Activated T-helper 1 cell treated with anti-CD3 and anti-CD28 coated beads, Interleukin-12 subunit alpha, Interleukin-12 subunit beta, Interleukin-2, Interleukin-4 antibody, amounts not matched to agents 30 ng/mL and 10 ng/mL and 1 ng/mL, durations not matched to agents 14 hours and 24 hours and 36 hours (primary cell): ENCODE measurements at regions of chr19 and their contacts with region 1.

Region 1: DNA sequence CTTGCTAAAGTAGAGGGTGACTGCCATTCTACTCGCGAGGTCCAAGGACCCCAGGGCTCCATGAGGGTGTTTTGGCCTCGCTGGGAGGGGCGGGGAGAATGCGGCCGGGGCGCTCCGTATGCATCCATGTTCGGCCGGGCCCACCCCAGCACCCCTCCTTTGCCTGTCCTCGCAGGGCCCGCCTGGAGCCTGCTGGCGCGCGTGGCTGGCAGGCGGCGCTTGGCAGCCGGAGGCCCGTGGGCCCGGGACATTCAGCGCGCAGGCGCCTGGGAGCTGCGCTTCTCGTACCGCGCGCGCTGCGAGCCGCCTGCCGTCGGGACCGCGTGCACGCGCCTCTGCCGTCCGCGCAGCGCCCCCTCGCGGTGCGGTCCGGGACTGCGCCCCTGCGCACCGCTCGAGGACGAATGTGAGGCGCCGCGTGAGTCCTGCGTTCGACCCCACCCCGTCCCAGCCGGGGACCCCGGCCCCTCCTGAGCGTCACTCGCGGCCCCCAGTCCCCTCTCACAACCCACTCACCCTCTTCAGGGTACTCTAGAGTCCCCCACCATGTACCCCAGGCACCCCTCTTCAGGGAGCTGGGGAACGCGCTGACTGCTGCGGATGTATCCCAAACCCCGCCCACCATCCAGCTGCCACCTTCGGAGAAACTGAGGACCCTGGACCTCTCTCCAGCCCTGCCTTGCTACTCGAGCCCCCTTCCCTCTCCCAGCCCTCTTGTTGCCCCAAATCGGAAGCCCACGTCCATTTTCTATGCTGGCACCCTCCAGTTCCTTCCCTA is 4.1 kb downstream of the DLL3 start:
- DNase-seq: peak; percentile 76
- H3K4me3 Mint-ChIP-seq: no peak overlapping the region
- H3K27ac Mint-ChIP-seq: no peak overlapping the region
- H3K4me1 Mint-ChIP-seq: peaks cover 27% of the 10 kb centered on the region
- H3K27me3 Mint-ChIP-seq: peaks cover 70% of the 10 kb centered on the region

Region 2: DNA sequence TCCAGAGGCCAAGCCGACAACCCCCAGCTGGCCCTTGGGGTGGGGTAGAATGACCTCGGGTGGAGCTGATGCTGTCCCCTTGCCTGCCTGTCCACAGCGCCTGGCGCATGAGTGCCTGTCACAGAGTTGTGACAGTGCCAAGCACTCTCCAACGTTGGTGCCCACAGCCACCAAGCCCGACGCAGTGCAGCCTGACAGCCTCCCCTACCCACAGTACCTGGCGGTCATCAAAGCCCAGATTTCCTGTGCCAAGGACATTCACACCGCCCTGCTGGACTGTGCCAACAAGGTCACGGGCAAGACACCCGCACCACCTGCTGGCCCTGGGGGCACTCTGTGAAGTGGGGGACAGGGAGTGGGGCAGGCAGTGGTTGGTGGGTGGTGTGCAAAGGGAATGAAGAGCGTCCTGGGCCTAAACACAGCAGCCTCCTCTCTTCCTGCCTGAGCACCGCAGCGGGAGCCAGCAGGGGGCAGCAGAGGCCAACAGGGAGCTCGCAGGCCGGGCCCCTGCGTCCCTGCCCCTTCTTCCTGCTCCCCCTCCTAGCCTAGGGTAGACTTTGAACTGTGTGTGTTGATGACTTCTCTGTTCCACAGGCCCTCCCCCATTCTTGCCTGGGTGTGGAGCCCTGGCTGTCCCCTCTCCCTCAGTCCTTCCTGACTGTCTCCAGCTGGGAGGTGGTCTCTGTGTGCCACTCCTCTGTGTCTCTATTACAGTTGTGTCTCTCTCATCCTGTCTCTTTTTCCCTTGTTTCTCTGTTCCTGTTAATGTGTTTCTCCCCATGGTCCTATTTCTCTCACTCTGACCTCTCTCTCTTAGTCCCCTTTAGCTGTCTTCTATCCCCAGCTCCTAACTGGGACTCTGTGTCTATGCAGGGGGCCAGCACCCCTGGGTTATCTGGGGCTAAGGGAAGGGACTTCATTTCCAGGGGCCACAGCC is 105.2 kb before region 1 on chr19:
- intact Hi-C with region 1: loop called (anchors 1 kb)
- DNase-seq: peak; percentile 88
- H3K4me3 Mint-ChIP-seq: no peak overlapping the region
- H3K27ac Mint-ChIP-seq: peak overlapping the region; percentile 67
- H3K4me1 Mint-ChIP-seq: peaks cover 58% of the 10 kb centered on the region
- H3K27me3 Mint-ChIP-seq: no peaks in the 10 kb centered on the region

Region 3: DNA sequence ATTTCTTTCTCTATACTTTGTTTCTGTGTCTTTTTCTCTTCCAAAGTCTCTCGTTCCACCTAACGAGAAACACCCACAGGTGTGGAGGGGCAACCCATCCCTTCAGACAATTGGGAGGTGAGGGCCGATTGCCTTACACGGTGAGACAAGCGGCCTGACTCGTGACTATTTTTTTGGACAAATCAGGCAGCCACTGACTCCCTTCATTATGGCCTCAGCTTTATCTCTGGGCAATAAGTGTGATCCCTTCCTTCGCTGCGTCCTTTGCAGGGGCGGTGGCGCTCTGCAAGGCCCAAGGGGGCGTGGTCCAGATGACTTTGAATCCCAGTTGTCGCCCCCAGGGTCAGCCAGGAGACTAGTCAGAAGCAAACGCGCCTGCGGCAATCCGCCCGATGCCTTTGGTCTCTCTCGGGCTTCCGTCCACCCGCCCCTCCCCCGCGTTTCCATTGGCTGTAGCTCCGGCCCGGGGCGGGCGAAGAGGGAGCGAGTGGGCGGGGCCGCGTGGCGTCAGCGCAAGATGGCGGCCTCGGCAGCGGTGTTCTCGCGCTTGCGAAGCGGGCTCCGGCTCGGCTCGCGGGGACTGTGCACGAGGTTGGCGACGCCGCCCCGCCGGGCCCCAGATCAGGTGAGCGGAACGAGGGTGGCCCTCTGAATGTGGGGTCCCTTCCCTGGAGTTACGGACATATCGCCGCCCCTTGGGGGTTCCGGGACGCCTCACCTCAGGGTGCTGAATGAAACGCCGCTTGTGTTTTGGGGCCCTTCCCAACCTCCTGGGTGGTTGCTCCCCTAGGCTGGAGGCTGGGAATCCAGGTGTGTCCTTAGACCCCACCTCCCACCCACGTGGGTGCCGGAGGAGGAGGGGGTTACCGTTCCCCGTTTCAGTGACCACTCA is 22.2 kb before region 1 on chr19 and contains the start of gene TIMM50:
- intact Hi-C with region 1: loop called (anchors 2 kb)
- DNase-seq: peak; percentile 96
- H3K4me3 Mint-ChIP-seq: peak within 1 kb of the TSS; percentile 95
- H3K27ac Mint-ChIP-seq: peak within 1 kb of the TSS; percentile 94
- H3K4me1 Mint-ChIP-seq: peaks cover 28% of the 10 kb centered on the region
- H3K27me3 Mint-ChIP-seq: no peaks in the 10 kb centered on the region
- total RNA-seq, gene TIMM50: 121 and 127 TPM in 2 replicates

Region 4: DNA sequence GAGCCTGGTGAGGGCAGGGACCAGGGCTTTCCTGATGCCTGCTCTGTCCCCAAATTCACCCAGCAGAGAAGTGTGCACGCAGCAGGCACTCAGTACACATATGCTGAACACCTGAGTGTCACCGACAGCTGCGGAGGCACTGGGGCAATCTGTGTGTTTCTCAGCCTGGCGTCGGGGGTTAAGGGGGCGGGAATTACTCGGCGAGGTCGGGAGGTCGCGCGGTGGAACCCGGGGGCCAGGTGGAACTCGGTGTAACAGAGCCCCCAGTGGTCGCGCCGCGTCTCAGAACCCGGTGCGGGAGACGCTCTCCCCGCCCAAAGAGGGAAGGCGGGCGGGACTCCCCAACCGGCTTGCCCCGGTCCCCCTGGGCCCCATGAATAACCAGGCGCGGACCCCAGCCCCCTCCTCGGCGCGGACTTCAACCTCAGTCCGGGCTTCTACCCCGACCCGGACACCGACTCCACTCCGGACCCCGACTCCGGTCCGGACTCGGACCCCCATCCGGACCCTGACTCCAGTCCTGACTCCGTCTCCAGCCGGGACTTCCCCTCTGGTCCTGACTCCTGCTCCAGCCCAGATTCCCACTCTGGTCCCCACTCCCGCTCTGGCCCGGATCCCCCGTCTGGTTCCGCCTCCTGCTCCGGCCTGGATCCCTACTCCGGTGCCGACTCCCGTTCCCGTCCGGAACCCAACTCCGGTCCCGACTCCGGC is 12.2 kb after region 1 on chr19 and contains the start of gene SELENOV:
- intact Hi-C with region 1: loop called (anchors 2 kb)
- DNase-seq: no peak
- H3K4me3 Mint-ChIP-seq: peak within 1 kb of the TSS; percentile 60
- H3K27ac Mint-ChIP-seq: no peak within 1 kb of the TSS
- H3K4me1 Mint-ChIP-seq: peaks cover 9% of the 10 kb centered on the region
- H3K27me3 Mint-ChIP-seq: peaks cover 43% of the 10 kb centered on the region
- total RNA-seq, gene SELENOV: not detected in 2 replicates

Region 5: GRCh38 chr19:39539519-39540332 is 36.9 kb after region 1 on chr19 and contains the start of gene EID2:
- intact Hi-C with region 1: no loop called
- DNase-seq: peak; percentile 92
- H3K4me3 Mint-ChIP-seq: peak within 1 kb of the TSS; percentile 95
- H3K27ac Mint-ChIP-seq: peak within 1 kb of the TSS; percentile 91
- H3K4me1 Mint-ChIP-seq: peaks cover 36% of the 10 kb centered on the region
- H3K27me3 Mint-ChIP-seq: peaks cover 2% of the 10 kb centered on the region
- total RNA-seq, gene EID2: 17.0 and 17.6 TPM in 2 replicates

Region 6: GRCh38 chr19:39645800-39646411 is 143.1 kb after region 1 on chr19:
- intact Hi-C with region 1: no loop called
- DNase-seq: no peak
- H3K4me3 Mint-ChIP-seq: no peak overlapping the region
- H3K27ac Mint-ChIP-seq: no peak overlapping the region
- H3K4me1 Mint-ChIP-seq: no peaks in the 10 kb centered on the region
- H3K27me3 Mint-ChIP-seq: peaks cover 4% of the 10 kb centered on the region